ENCODE measurements at regions of chr1 and their contacts with region 1.

Region 1: DNA sequence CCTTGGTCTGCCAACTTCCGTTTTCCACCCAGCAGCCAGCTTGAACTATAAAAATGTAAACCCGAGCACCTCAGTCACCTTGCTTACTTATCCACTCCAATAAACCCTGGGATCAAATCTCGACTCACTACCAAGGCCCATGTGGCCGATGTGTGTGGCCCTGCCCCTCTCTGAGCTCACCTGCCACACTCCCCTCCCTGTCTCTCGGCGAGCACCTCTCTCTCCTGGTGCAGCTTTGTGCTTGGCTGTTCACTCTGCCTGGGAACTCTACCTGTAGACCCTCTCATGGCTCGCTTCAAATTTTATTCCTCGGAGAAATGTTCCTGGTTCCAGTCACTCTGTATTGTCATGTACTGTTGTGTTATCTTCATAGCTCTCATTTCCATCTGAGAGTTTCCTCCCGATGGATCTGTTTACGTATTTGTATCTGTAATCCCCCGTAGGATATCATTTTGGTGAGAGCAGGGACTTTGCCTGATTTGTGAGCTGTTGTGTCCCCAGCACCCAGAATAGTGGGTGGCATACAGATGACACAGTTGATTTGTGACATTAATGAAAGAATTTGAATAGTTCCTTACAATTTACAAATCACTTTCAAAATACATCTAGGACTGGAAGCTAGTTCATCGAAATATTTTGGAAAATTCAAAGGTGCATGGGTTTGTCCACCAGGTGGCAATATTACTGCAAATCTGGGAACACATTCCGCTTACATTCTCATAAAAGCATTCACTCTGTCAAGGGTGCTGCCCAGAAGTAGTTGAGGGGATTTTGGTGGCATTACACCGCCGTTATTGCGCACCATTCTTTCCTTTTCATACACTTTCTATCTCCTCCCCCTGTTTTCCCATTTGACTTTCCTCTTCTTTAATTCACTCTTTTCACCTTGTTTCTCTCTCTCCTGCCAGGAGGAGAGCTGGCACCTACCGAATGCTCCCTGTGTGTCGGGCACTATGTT is 95.3 kb downstream of the ABCA4 start:
- DNase-seq: no peak
- ATAC-seq: no peak

Region 2: GRCh38 chr1:93909146-93910050 is 116.3 kb before region 1 on chr1 and contains the start of gene GCLM:
- intact Hi-C with region 1: loop called (anchors 5 kb)
- DNase-seq: peak; percentile 98
- ATAC-seq: peak; percentile 98
- total RNA-seq, gene GCLM: 9.4 TPM

Region 3: GRCh38 chr1:94335950-94336349 is 310.3 kb after region 1 on chr1:
- intact Hi-C with region 1: loop called (anchors 1 kb)
- DNase-seq: no peak
- ATAC-seq: peak; percentile 91

Measured in Right ventricle myocardium inferior (tissue), 1 donor.